BJ (cell line): ENCODE measurements at regions of chrX and their contacts with region 1.

Region 1: GRCh38 chrX:130079824-130080406 is 30.4 kb downstream of the ELF4 start:
- DNase-seq: peak; percentile 19
- H3K4me3 ChIP-seq: no peak overlapping the region
- H3K27me3 ChIP-seq: no peaks in the 10 kb centered on the region
- CTCF ChIP-seq: peak; percentile 68

Region 2: GRCh38 chrX:129665910-129666644 is 413.8 kb before region 1 on chrX:
- CTCF ChIA-PET with region 1: no interaction called
- POLR2A ChIA-PET with region 1: no interaction called
- DNase-seq: peak; percentile 21
- H3K4me3 ChIP-seq: no peak overlapping the region
- H3K27me3 ChIP-seq: no peaks in the 10 kb centered on the region
- CTCF ChIP-seq: no peak

Region 3: GRCh38 chrX:130190801-130191200 is 110.9 kb after region 1 on chrX:
- CTCF ChIA-PET with region 1: interaction called, 44 read pairs
- POLR2A ChIA-PET with region 1: no interaction called
- DNase-seq: no peak
- H3K4me3 ChIP-seq: no peak overlapping the region
- H3K27me3 ChIP-seq: no peaks in the 10 kb centered on the region
- CTCF ChIP-seq: no peak